ENCODE measurements at regions of chr16 and their contacts with region 1.

Region 1: GRCh38 chr16:7268182-7268581 is 64.5 kb upstream of the RBFOX1 start:
- DNase-seq: peak in 1 of 2 donors; percentile 18
- ATAC-seq: peak in 6 of 8 donors; percentile 4 to 63 (median 32)
- H3K4me3 ChIP-seq: no peak overlapping the region
- H3K27ac ChIP-seq: no peak overlapping the region
- H3K4me1 ChIP-seq: no peaks in the 10 kb centered on the region
- H3K27me3 ChIP-seq: no peaks in the 10 kb centered on the region
- CTCF ChIP-seq: peak; percentile 48 to 71 (median 66)

Region 2: DNA sequence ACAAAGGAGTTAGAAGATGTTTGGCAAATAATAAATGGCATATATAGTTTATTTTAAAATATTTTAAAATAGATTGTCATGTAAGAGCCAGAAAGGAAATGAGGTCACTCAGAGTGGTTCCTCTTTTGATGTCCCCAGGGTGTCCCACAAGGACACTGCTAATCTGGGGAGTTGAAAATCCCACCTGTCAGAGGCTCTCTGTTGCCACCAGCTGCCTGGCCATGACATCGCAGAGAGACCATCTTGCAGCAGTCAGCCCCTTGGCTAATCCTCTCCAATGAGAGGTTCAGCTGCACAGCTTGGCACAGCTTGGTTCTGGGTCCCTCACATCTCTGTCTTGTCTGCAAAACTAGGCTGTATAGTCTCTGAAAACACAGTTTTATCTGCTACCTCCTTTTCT is 53.5 kb after region 1 on chr16:
- intact Hi-C with region 1: loop called in 1 of 10 experiments (anchors 10 kb)
- DNase-seq: no peak
- ATAC-seq: peak in 1 of 8 donors; percentile 49
- H3K4me3 ChIP-seq: no peak overlapping the region
- H3K27ac ChIP-seq: no peak overlapping the region
- H3K4me1 ChIP-seq: no peaks in the 10 kb centered on the region
- H3K27me3 ChIP-seq: no peaks in the 10 kb centered on the region
- CTCF ChIP-seq: no peak

Region 3: GRCh38 chr16:7534749-7535148 is 266.6 kb after region 1 on chr16:
- intact Hi-C with region 1: no loop called
- DNase-seq: no peak
- ATAC-seq: no peak
- H3K4me3 ChIP-seq: no peak overlapping the region
- H3K27ac ChIP-seq: no peak overlapping the region
- H3K4me1 ChIP-seq: peaks cover 0 to 5% (median 0%) of the 10 kb centered on the region in 9 donors
- H3K27me3 ChIP-seq: no peaks in the 10 kb centered on the region
- CTCF ChIP-seq: no peak

Measured in heart right ventricle (tissue), 16 donors.